SK-N-SH (cell line): ENCODE measurements at regions of chr6 and their contacts with region 1.

Region 1: GRCh38 chr6:13908955-13909381 is 15.8 kb upstream of the RNF182 start:
- DNase-seq: peak; percentile 78
- H3K4me3 ChIP-seq: no peak overlapping the region
- H3K27ac ChIP-seq: no peak overlapping the region
- H3K4me1 ChIP-seq: peaks cover under 1 to 2% of the 10 kb centered on the region in 2 experiments; a peak in 2 of 4 replicates
- H3K27me3 ChIP-seq: no peaks in the 10 kb centered on the region
- CTCF ChIP-seq: peak; percentile 91
- EP300 ChIP-seq: no peak
- RAD21 ChIP-seq: peak; percentile 98

Region 2: DNA sequence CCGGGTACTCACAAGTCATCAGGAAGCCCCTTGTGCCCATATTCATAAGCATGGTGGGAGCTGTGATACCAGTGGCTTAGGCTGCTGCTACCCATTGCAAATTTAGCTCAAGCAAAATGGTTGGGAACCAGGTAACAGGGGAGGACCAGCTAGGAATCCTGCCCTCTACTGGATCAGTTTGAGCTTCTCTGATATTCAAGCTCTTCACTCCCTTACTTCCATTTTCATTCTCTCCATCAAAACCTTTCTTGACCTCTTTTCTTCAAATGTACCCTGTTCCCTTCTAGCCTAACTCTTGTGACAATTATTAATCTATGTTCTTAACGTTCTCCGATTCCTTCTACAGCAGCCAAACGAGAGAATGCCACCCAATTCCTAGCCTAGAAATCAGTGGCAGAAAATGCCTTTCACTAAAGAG is 284.1 kb before region 1 on chr6:
- CTCF ChIA-PET with region 1: no interaction called
- POLR2A ChIA-PET with region 1: no interaction called
- DNase-seq: peak; percentile 53
- H3K4me3 ChIP-seq: no peak overlapping the region; a peak in 1 of 4 replicates
- H3K27ac ChIP-seq: no peak overlapping the region; a peak in 1 of 4 replicates
- H3K4me1 ChIP-seq: no peaks in the 10 kb centered on the region
- H3K27me3 ChIP-seq: no peaks in the 10 kb centered on the region
- CTCF ChIP-seq: peak; percentile 66
- EP300 ChIP-seq: no peak
- RAD21 ChIP-seq: peak; percentile 46

Region 3: DNA sequence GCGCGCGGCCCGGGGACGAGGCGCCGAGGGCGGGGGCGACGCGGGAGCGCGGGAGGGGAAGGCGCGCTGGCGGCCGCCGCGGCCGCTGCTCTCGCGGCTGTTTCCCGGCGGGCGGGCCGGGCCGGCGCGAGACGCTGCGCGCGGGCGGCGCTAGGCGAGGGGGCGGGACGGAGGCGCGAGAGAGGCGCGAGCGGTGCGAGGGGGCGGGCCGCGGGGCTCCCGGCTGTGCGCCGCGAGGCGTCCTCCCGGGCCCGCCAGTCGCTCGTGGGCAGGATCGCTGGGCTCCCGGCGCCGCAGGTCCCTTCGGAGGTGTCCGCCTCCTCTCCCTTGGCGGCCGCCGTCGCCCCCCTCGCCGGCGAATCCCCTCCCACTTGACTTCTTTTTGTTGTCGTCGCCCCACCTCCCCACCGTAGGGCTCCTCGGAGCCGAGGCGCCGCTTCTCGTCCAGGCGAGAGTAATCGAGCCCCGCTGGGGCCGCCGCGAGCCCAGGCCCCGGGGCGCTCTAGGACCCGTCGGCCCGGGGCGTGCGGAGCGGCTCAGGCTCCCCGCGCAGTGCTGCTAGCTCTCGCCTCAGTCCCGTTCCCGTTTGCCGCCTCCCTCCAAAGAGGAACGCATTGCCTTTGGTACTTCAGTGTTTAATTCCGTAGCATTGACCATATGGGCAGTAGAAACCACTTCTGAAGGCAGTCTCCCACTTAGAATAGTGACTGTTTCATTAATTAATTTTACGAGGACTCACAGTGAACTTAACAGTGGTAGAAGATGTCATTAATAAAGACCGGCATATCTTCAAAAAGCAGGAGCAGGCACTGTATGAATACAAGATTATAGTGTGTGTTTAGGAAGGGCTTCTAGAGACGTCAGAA is 197.0 kb before region 1 on chr6 and contains the start of gene RANBP9:
- CTCF ChIA-PET with region 1: no interaction called
- POLR2A ChIA-PET with region 1: no interaction called
- DNase-seq: peak; percentile 95
- H3K4me3 ChIP-seq: peak within 1 kb of the TSS; percentile 85 to 92
- H3K27ac ChIP-seq: peak within 1 kb of the TSS; percentile 91 to 94
- H3K4me1 ChIP-seq: peaks cover 4 to 7% of the 10 kb centered on the region in 2 experiments; a peak in 3 of 4 replicates
- H3K27me3 ChIP-seq: no peaks in the 10 kb centered on the region
- CTCF ChIP-seq: no peak
- EP300 ChIP-seq: peak in 1 of 2 experiments; percentile 24; a peak in 1 of 4 replicates
- RAD21 ChIP-seq: no peak
- polyA plus RNA-seq, gene RANBP9: 19.9 and 20.4 TPM in 2 replicates

Region 4: DNA sequence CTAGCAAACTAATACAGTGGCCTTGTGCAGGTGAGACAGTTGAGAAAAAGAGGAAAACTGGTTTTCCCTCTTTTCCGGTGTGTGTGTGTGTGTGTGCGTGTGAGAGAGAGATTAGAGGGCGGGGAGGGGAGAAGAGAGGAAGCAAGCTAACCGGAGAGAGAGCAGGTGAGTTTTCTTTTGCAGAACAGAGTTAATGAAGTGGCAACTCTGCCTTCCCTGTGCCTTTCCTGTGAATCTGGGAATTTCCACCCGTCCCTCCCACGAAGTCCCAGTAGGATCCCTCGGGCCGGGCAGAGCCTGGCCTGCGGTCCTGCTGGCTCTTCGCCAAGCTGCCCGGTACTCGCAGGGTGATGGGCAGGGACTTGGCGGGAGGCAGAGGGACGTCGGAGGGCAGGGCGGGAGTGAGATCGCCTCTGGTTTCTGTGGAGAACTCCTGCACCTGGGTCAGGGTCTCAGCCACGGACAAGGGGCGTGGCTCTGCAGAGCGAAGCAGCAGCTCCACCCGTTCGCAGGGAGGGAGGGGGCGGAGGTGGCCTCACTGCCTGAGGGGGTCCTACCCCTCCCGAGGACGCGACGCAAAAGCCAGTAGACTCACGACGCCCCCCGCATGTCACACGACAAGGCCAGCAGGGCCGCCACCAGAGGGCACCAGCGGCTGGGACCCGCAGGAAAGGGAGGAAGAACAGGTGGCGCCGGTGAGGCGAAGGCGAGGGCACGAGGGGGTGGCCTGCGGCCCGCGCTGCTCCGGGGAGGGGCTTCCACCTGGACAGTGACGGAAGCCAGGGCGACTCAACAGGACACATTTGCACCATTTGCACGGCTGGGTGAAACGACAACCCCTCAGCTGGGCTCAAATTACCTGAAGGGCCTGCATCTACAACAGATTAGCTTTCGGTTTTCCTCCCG is 35.4 kb before region 1 on chr6:
- CTCF ChIA-PET with region 1: interaction called, 10 read pairs
- POLR2A ChIA-PET with region 1: no interaction called
- DNase-seq: peak; percentile 92
- H3K4me3 ChIP-seq: peak overlapping the region; percentile 38 to 62
- H3K27ac ChIP-seq: no peak overlapping the region
- H3K4me1 ChIP-seq: peaks cover 0 to 10% of the 10 kb centered on the region in 2 experiments; a peak in 1 of 4 replicates
- H3K27me3 ChIP-seq: no peaks in the 10 kb centered on the region
- CTCF ChIP-seq: peak; percentile 71
- EP300 ChIP-seq: no peak
- RAD21 ChIP-seq: peak; percentile 49

Region 5: DNA sequence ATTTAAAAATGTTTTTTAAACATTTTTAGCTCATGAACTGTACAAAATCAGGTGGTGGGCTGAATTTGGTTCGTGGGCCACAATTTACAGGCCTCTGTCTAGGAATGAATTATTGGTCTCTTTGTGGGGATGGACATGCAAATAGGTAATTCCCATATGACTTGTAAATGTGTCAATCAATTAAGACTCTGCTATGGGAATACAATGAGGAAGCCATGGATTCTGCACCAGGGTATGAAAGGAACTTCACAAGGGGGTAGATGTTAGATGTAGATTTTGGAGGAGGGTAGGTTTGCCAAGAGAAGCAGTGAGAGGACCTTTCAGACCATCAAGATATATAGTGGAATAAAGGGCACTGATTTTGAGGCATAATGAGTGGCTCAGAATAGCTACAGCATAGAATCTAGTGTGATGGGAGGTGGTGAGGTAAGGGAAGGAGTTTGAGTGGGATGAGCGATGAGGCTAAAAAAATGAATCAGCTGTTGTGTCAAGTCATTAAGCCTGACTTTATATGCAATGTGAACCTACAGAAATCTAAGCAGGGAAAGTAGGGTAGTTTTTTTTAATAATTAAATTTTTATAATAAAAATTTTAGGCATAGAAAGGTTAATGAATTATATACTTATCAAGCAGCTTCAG is 16.8 kb before region 1 on chr6:
- CTCF ChIA-PET with region 1: interaction called, 16 read pairs
- POLR2A ChIA-PET with region 1: no interaction called
- DNase-seq: no peak
- H3K4me3 ChIP-seq: no peak overlapping the region
- H3K27ac ChIP-seq: no peak overlapping the region
- H3K4me1 ChIP-seq: no peaks in the 10 kb centered on the region
- H3K27me3 ChIP-seq: no peaks in the 10 kb centered on the region; the same call in 1 of the 2 replicates
- CTCF ChIP-seq: no peak
- EP300 ChIP-seq: no peak
- RAD21 ChIP-seq: no peak

Region 6: GRCh38 chr6:14004258-14004657 is 95.3 kb after region 1 on chr6:
- CTCF ChIA-PET with region 1: interaction called, 10 read pairs
- POLR2A ChIA-PET with region 1: no interaction called
- DNase-seq: peak; percentile 67
- H3K4me3 ChIP-seq: no peak overlapping the region
- H3K27ac ChIP-seq: no peak overlapping the region
- H3K4me1 ChIP-seq: peaks cover 11 to 13% of the 10 kb centered on the region in 2 experiments; a peak in 3 of 4 replicates
- H3K27me3 ChIP-seq: no peaks in the 10 kb centered on the region
- CTCF ChIP-seq: no peak
- EP300 ChIP-seq: no peak; a peak in 1 of 4 replicates
- RAD21 ChIP-seq: no peak

Region 7: GRCh38 chr6:14046476-14047068 is 137.6 kb after region 1 on chr6:
- CTCF ChIA-PET with region 1: interaction called, 43 read pairs
- POLR2A ChIA-PET with region 1: no interaction called
- DNase-seq: peak; percentile 65
- H3K4me3 ChIP-seq: no peak overlapping the region
- H3K27ac ChIP-seq: no peak overlapping the region
- H3K4me1 ChIP-seq: no peaks in the 10 kb centered on the region
- H3K27me3 ChIP-seq: no peaks in the 10 kb centered on the region
- CTCF ChIP-seq: peak; percentile 73
- EP300 ChIP-seq: no peak
- RAD21 ChIP-seq: peak; percentile 73

Region 8: DNA sequence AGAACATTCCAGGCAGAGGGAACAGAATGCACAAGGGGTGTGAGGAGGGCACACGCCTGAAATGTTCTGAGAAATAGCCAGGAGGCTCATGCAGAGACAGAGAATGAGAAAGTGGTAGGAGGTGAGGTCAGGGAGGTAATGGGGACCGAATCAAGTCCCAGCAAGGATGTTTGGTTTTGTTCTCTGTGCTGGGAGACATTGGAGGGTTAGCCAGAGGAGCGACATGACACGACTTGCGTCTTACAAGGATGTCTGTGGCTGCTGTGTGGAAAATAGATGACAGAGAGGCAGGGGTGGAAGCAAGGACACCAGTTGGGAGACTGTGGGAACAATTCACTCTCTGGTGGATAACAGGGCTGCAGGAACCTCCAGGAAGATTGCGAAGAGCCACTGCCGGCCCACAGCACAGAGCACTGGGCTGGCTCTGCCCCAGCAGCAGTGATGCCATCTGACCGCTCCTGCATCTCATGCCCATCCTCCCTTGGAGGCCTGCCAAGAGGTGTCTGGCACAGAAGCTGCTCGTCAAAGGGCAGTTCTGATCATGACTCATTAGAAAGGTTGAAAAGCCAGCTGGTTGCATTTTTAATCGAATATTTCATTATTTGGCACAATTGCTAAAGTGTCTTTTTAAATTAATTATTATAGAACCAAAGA is 150.9 kb after region 1 on chr6:
- CTCF ChIA-PET with region 1: interaction called, 155 read pairs
- POLR2A ChIA-PET with region 1: no interaction called
- DNase-seq: peak; percentile 79
- H3K4me3 ChIP-seq: no peak overlapping the region
- H3K27ac ChIP-seq: peak overlapping the region in 1 of 2 experiments; percentile 24; a peak in 2 of 4 replicates
- H3K4me1 ChIP-seq: peaks cover 8 to 12% of the 10 kb centered on the region in 2 experiments; a peak in 2 of 4 replicates
- H3K27me3 ChIP-seq: no peaks in the 10 kb centered on the region
- CTCF ChIP-seq: no peak
- EP300 ChIP-seq: peak; percentile 60 to 62; a peak in 2 of 4 replicates
- RAD21 ChIP-seq: 0 out of 2 replicates have a peak, but pooled peaks have one; percentile 34

Region 9: GRCh38 chr6:14129575-14129974 is 220.6 kb after region 1 on chr6:
- CTCF ChIA-PET with region 1: interaction called, 13 read pairs
- POLR2A ChIA-PET with region 1: no interaction called
- DNase-seq: peak; percentile 76
- H3K4me3 ChIP-seq: no peak overlapping the region; a peak in 1 of 4 replicates
- H3K27ac ChIP-seq: no peak overlapping the region
- H3K4me1 ChIP-seq: peaks cover 0 to 4% of the 10 kb centered on the region in 2 experiments; a peak in 2 of 4 replicates
- H3K27me3 ChIP-seq: no peaks in the 10 kb centered on the region
- CTCF ChIP-seq: peak; percentile 51
- EP300 ChIP-seq: no peak
- RAD21 ChIP-seq: peak; percentile 85